Panc1 (cell line): ENCODE measurements at regions of chr15 and their contacts with region 1.

Region 1: DNA sequence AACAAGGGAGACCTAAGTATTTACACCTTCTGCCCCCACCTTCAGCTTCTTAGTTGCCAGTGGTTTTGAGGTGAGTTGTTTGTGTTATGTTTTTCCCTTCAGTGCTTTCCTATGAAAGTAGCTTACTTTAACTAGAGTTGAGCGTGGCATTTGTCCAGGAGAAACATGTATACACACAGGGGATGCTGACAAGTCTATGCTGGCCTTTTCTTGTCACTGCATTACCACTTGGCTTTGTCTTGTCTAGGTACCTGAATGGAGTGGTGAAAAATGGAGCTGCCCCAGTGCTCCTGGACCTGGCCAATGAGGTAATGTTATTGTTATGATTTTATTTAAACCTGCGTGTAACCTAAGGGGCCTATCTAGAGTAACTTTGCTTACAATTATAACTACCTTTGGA is 74.4 kb downstream of the CDIN1 start:
- DNase-seq: no peak
- ATAC-seq: no peak
- H3K4me3 ChIP-seq: no peak overlapping the region
- H3K27ac ChIP-seq: no peak overlapping the region
- H3K4me1 ChIP-seq: no peaks in the 10 kb centered on the region; the same call in 1 of the 2 replicates
- H3K27me3 ChIP-seq: no peaks in the 10 kb centered on the region
- CTCF ChIP-seq: no peak

Region 2: GRCh38 chr15:36591536-36592411 is 62.1 kb before region 1 on chr15:
- CTCF ChIA-PET with region 1: no interaction called
- POLR2A ChIA-PET with region 1: interaction called, 12 read pairs
- in situ Hi-C with region 1: no loop called
- intact Hi-C with region 1: no loop called
- DNase-seq: no peak
- ATAC-seq: peak; percentile 72
- H3K4me3 ChIP-seq: no peak overlapping the region
- H3K27ac ChIP-seq: peak overlapping the region; percentile 25; the same call in 1 of the 2 replicates
- H3K4me1 ChIP-seq: peaks cover 18% of the 10 kb centered on the region
- H3K27me3 ChIP-seq: no peaks in the 10 kb centered on the region
- CTCF ChIP-seq: peak; percentile 10; the same call in 1 of the 2 replicates